Calu3 (cell line): ENCODE measurements at regions of chr6 and their contacts with region 1.

Region 1: DNA sequence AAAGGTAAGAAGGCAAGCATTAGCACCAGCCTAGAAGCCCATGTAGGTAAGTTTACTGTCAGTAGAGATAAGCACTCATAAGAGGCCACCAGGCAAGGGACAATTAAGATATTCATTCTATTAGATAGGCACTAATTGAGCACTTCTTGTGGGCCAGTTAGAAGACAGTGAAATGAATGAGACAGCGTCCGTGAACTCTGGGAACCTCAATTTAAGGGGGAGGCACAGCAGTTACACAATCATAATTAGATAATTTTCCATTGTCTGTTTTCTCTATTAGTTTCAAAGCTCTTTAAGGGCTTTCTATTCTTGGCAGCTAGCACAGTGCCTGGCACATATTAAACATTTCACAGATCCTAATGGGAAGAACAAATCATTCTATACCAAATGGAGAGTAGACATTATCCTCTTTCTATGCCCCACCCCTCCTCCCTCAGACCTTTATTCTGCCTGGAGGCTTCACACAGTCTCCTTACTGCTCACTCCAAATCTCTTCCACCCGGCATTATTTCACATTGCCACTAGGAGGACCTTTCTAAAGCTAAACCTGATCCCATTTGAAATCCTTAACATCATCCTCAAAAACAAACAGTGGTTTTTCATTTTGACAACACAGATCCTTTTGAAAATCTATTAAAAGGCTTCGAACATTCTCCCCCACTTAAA is 529.6 kb downstream of the ADGRB3 start:
- DNase-seq: peak; percentile 18
- H3K4me3 Mint-ChIP-seq: no peak overlapping the region
- H3K27ac Mint-ChIP-seq: no peak overlapping the region
- H3K4me1 Mint-ChIP-seq: no peaks in the 10 kb centered on the region
- H3K27me3 Mint-ChIP-seq: no peaks in the 10 kb centered on the region
- CTCF ChIP-seq: no peak

Region 2: GRCh38 chr6:69719602-69720193 is 555.0 kb after region 1 on chr6:
- CTCF ChIA-PET with region 1: no interaction called
- intact Hi-C with region 1: loop called (anchors 10 kb)
- DNase-seq: peak; percentile 41
- H3K4me3 Mint-ChIP-seq: no peak overlapping the region
- H3K27ac Mint-ChIP-seq: no peak overlapping the region
- H3K4me1 Mint-ChIP-seq: no peaks in the 10 kb centered on the region
- H3K27me3 Mint-ChIP-seq: no peaks in the 10 kb centered on the region
- CTCF ChIP-seq: peak; percentile 44